ENCODE measurements at regions of chr12 and their contacts with region 1.

Region 1: GRCh38 chr12:9797722-9798619 is 29.3 kb upstream of the KLRF1 start:
- DNase-seq: peak; percentile 77
- H3K4me3 Mint-ChIP-seq: no peak overlapping the region
- H3K27ac Mint-ChIP-seq: peak overlapping the region; percentile 54
- H3K4me1 Mint-ChIP-seq: peaks cover 44% of the 10 kb centered on the region
- H3K27me3 Mint-ChIP-seq: no peaks in the 10 kb centered on the region

Region 2: DNA sequence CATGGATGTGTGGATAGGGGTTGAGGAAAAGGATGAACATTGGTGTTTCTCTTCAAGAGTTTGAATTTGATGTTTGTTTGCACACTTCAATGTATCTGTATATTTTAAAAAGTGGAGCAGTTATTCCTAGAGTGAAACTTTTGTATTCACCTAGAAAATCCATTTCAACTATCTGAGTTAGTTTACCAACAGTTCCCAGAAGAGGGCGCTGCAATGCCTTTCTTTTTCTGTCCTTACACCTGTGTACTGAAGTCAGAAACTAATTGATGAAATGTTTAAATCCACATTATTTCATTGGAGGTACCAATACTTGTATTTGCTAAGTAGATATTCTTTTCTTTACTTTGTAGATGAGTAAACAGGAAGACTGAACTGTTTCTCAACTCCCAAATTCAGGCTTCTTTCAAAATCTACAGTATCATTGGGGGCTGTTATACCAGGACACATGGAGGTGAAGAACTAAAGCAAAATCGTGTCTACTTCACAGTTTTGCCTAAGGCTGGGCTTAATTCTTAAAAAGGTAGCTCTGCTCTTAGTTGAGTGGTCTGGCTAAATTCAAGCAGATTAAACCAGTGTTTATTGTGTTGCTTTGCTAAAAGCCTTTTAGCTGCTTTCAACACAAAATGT is 163.7 kb before region 1 on chr12:
- CTCF ChIA-PET with region 1: interaction called, 4 read pairs
- POLR2A ChIA-PET with region 1: no interaction called
- intact Hi-C with region 1: loop called (anchors 1 kb)
- DNase-seq: peak; percentile 81
- H3K4me3 Mint-ChIP-seq: no peak overlapping the region
- H3K27ac Mint-ChIP-seq: peak overlapping the region; percentile 66
- H3K4me1 Mint-ChIP-seq: peaks cover 60% of the 10 kb centered on the region
- H3K27me3 Mint-ChIP-seq: no peaks in the 10 kb centered on the region

Region 3: DNA sequence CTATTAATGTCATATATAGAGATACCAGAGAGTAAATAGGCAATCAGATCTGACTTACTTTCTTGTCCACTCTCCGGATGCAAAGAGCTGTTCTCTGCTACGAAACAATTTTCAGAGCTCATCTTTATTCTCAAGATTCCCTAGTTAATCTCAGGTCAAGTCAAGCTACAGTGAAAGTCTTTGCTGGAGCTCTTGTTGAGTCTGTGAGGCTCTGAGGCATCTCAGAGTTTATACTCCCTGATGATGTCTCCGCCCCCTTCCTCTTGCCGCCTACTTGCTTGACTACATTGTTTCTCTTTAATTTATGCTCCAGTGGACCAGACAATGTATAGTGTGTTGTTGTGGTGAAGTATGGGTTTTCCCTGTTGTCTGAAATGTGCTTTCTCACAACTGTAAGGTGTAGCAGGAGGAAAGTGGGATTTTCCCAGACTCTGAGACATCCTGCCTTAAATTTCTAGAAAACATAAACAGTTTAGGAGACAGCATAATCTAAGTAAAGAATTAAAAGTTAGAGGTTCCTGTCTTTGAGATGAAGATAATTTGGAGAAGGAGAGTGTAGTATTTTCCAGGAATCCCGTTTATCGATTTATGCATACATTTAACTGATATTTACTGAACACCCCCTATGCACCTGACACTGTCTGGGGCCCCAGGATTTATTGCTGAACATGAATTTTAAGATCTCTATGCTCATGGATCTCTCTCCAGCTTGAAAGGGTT is 37.1 kb before region 1 on chr12 and contains the start of gene CD69:
- CTCF ChIA-PET with region 1: interaction called, 624 read pairs
- POLR2A ChIA-PET with region 1: interaction called, 180 read pairs
- intact Hi-C with region 1: loop called (anchors 1 kb)
- DNase-seq: peak; percentile 90
- H3K4me3 Mint-ChIP-seq: peak within 1 kb of the TSS; percentile 100
- H3K27ac Mint-ChIP-seq: peak within 1 kb of the TSS; percentile 99
- H3K4me1 Mint-ChIP-seq: peaks cover 52% of the 10 kb centered on the region
- H3K27me3 Mint-ChIP-seq: peaks cover 2% of the 10 kb centered on the region
- total RNA-seq, gene CD69: 118 to 120 TPM

Region 4: DNA sequence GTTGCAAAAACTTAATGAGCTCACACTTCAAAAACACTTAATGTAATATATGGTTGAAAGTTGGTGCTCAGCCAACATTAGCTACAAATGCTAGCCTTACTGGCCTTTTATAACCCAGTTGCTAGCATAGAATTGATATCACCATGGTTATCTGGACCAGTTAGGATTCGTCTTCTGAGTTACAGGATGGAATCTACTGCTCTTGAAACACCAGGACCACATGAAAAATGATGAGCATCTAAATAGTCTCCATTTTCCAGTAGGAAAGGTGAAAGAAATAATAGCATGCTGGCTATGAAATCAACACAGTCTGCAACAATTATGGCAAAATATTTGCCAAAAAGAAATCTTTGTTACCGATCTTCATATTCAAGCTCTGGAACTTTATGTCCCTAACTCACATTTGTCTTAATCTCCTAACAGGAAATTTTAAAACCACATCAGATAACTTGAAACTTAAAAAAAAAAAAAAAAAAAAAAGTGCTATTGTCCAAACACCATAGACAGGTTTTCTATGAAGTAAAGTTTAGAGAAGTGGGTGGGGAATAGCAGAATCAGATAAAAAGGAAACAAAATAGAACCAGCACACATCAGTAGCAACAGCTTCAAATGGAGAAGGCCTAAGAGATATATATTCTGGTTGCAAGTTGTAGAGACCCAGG is 24.6 kb before region 1 on chr12:
- CTCF ChIA-PET with region 1: interaction called, 5 read pairs
- POLR2A ChIA-PET with region 1: interaction called, 3 read pairs
- intact Hi-C with region 1: loop called (anchors 2 kb)
- DNase-seq: no peak
- H3K4me3 Mint-ChIP-seq: peak overlapping the region; percentile 7
- H3K27ac Mint-ChIP-seq: peak overlapping the region; percentile 55
- H3K4me1 Mint-ChIP-seq: peaks cover 88% of the 10 kb centered on the region
- H3K27me3 Mint-ChIP-seq: no peaks in the 10 kb centered on the region

Region 5: DNA sequence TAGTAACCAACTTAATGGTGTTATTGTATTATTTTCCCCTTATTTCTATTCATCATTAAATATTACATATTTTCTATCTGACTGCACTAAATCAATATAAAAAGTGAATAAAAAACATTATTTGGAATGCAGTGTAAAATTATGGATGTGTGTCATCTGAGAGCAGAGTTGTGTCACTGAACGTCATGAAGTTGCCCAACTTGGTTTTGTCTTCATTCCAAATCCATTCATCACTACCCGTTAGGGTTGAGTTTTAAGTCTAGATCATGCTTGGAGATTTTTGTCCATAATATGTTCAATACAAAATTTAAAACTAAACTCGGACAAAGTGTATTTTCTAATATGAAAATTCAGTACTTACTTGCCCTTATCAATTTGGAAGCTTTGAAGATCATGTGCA is 45.4 kb after region 1 on chr12:
- CTCF ChIA-PET with region 1: no interaction called
- POLR2A ChIA-PET with region 1: no interaction called
- intact Hi-C with region 1: no loop called
- DNase-seq: no peak
- H3K4me3 Mint-ChIP-seq: no peak overlapping the region
- H3K27ac Mint-ChIP-seq: no peak overlapping the region
- H3K4me1 Mint-ChIP-seq: no peaks in the 10 kb centered on the region
- H3K27me3 Mint-ChIP-seq: no peaks in the 10 kb centered on the region

Region 6: GRCh38 chr12:9869307-9870161 is 71.6 kb after region 1 on chr12 and contains the start of gene CLEC2B:
- CTCF ChIA-PET with region 1: interaction called, 12 read pairs
- POLR2A ChIA-PET with region 1: interaction called, 9 read pairs
- intact Hi-C with region 1: loop called (anchors 1 kb)
- DNase-seq: peak; percentile 41
- H3K4me3 Mint-ChIP-seq: peak within 1 kb of the TSS; percentile 82
- H3K27ac Mint-ChIP-seq: peak within 1 kb of the TSS; percentile 93
- H3K4me1 Mint-ChIP-seq: peaks cover 19% of the 10 kb centered on the region
- H3K27me3 Mint-ChIP-seq: no peaks in the 10 kb centered on the region
- total RNA-seq, gene CLEC2B: 12.6 to 13.7 TPM

Region 7: DNA sequence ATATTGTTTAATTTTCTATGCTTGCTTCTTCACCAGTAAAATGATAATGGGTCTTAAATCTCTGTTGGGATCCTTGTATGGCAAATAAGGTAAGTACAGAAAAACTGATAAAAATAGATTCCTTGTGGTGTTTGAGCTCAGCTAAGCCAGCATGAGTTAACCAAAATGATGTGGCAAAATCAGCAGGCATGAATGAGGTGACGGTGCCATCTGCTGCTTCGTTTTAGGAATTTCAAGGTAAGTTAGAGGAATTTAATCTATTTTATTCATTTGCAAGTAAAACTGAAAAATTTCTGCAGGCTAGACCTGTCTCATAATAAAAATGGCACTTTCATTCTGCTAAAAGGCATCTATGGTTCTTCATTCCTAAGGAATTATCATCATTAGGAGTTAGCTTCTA is 342.0 kb after region 1 on chr12:
- CTCF ChIA-PET with region 1: interaction called, 10 read pairs
- POLR2A ChIA-PET with region 1: no interaction called
- intact Hi-C with region 1: loop called (anchors 5 kb)
- DNase-seq: peak; percentile 66
- H3K4me3 Mint-ChIP-seq: no peak overlapping the region
- H3K27ac Mint-ChIP-seq: no peak overlapping the region
- H3K4me1 Mint-ChIP-seq: no peaks in the 10 kb centered on the region
- H3K27me3 Mint-ChIP-seq: peaks cover 8% of the 10 kb centered on the region

Measured in activated CD4-positive, alpha-beta memory T cell treated with anti-CD3 and anti-CD28 coated beads for 36 hours (primary cell).